ENCODE measurements at regions of chr21 and their contacts with region 1.

Region 1: DNA sequence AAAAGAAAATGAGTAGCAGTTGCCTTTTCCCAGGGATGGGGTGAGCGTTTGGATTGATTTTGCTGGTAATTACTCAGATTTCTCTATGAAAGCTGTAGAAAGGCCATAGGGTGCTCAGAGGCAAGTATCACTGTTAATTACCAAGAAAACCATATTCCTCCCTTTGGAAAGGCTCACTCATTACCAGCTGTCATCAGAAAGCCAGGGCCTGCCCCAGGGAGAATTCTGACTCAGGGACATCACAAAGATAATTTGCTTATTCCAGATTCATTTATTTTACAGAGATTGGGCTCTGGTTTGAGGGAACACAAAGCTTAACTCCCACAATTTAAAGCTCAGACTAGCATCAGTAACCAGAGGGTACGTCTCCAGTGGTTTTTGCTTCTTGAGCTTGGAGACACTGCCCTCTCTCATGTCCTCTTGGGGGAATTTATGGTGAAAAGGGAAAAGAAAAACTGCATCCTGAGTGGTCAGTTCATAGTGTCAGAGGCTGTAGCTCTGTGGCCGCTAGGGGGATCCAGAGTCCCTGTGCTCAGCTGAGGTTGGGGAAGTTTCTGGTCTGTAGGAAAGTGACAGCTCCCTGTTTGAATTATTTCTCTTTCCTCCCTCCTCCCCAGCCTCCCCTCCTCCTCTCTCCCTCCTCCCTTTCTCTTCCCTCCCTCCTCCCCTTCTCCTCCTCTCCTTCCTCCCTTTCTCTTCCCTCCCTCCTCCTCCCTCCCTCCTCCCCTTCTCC is 204.3 kb downstream of the KCNJ6 start:
- DNase-seq: peak; percentile 76 to 77
- H3K4me3 ChIP-seq: no peak overlapping the region
- H3K4me3 Mint-ChIP-seq: no peak overlapping the region
- H3K27ac Mint-ChIP-seq: no peak overlapping the region
- H3K4me1 ChIP-seq: peaks cover 9% of the 10 kb centered on the region; the same call in 1 of the 2 replicates
- H3K4me1 Mint-ChIP-seq: peaks cover 13% of the 10 kb centered on the region
- H3K27me3 ChIP-seq: no peaks in the 10 kb centered on the region
- H3K27me3 Mint-ChIP-seq: no peaks in the 10 kb centered on the region
- CTCF ChIP-seq: peak; percentile 86 to 90

Region 2: DNA sequence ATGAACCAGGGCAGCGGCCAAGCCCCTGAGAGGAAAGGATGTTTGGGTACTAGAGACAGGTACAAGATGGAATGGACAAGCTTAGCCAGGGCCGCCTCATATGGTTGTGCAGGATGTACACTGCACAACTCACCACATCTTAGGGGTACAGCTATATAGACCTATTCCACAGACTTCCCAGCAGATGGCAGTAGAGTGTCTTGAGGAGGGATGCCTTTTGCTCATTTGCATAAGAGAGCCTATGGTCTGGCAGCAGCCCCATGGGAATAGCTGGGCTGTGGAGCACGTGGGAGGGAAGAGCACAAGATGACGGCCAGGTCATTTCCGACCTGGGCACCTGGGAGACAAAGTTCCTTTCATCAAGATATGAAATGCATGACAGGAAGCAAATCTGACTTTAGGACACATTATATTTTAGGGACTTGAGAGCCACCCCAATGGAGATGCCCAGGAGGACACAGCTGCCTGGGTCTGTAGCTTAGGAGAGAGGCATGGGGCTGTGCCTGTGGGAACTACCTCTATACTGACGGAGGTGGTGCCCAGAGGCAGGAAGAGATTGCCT is 11.3 kb before region 1 on chr21:
- CTCF ChIA-PET with region 1: interaction called, 28 read pairs
- POLR2A ChIA-PET with region 1: interaction called, 3 read pairs
- intact Hi-C with region 1: no loop called
- DNase-seq: peak; percentile 71 to 73
- H3K4me3 ChIP-seq: no peak overlapping the region
- H3K4me3 Mint-ChIP-seq: no peak overlapping the region
- H3K27ac Mint-ChIP-seq: no peak overlapping the region
- H3K4me1 ChIP-seq: peaks cover 7% of the 10 kb centered on the region
- H3K4me1 Mint-ChIP-seq: no peaks in the 10 kb centered on the region
- H3K27me3 ChIP-seq: no peaks in the 10 kb centered on the region
- H3K27me3 Mint-ChIP-seq: no peaks in the 10 kb centered on the region
- CTCF ChIP-seq: peak; percentile 61 to 65

Region 3: DNA sequence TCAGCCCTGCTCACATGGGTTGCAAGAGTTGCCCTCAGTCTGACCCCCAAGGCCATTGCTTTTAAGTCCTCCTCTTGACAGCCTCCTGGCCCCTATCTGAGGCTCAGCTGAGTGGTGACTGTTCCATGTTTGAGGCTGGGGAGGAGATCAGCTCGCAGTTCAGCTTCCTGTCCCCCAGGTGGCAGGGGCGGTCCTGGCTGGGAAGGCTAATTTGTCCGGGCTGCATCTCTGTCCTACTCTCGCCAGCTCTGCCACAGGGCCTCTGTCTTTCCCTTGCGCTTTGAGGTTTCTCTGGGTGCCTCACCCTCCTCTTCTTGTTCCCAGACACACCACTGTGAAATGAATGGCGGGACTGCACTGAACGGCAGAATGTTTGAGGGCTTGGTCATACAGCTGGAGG is 47.0 kb after region 1 on chr21:
- CTCF ChIA-PET with region 1: interaction called, 10 read pairs
- POLR2A ChIA-PET with region 1: no interaction called
- intact Hi-C with region 1: loop called (anchors 1 kb)
- DNase-seq: peak; percentile 54 to 65
- H3K4me3 ChIP-seq: no peak overlapping the region
- H3K4me3 Mint-ChIP-seq: no peak overlapping the region
- H3K27ac Mint-ChIP-seq: no peak overlapping the region
- H3K4me1 ChIP-seq: peaks cover 6% of the 10 kb centered on the region
- H3K4me1 Mint-ChIP-seq: peaks cover 2% of the 10 kb centered on the region
- H3K27me3 ChIP-seq: no peaks in the 10 kb centered on the region
- H3K27me3 Mint-ChIP-seq: no peaks in the 10 kb centered on the region
- CTCF ChIP-seq: peak; percentile 51 to 78

Region 4: DNA sequence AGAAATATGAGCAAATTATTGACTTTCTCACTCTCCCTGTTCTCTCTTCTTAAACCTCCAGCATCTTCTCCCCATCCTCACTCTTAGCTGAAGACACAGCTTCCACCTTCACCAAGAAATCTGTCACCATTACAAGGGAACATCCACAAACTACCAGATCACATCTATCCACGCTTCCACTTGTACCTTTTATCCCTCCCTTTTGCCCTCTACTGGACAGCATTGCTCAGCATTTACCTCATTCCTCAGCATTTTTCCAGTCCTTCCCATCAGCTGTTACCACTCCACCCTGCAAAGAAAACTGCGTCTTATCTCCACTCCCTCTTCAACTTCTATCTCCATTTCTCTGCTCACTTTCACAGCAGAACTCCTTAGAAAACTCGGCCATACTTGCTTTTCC is 161.7 kb after region 1 on chr21:
- CTCF ChIA-PET with region 1: no interaction called
- POLR2A ChIA-PET with region 1: no interaction called
- intact Hi-C with region 1: loop called (anchors 5 kb)
- DNase-seq: peak in 1 of 2 experiments; percentile 6
- H3K4me3 ChIP-seq: no peak overlapping the region
- H3K4me3 Mint-ChIP-seq: no peak overlapping the region
- H3K27ac Mint-ChIP-seq: no peak overlapping the region
- H3K4me1 ChIP-seq: no peaks in the 10 kb centered on the region
- H3K4me1 Mint-ChIP-seq: no peaks in the 10 kb centered on the region
- H3K27me3 ChIP-seq: no peaks in the 10 kb centered on the region
- H3K27me3 Mint-ChIP-seq: peaks cover 3% of the 10 kb centered on the region
- CTCF ChIP-seq: peak in 1 of 2 experiments; percentile 23

Region 5: GRCh38 chr21:37965088-37965805 is 253.2 kb after region 1 on chr21:
- CTCF ChIA-PET with region 1: no interaction called
- POLR2A ChIA-PET with region 1: no interaction called
- intact Hi-C with region 1: loop called (anchors 5 kb)
- DNase-seq: no peak
- H3K4me3 ChIP-seq: no peak overlapping the region
- H3K4me3 Mint-ChIP-seq: no peak overlapping the region
- H3K27ac Mint-ChIP-seq: no peak overlapping the region
- H3K4me1 ChIP-seq: no peaks in the 10 kb centered on the region
- H3K4me1 Mint-ChIP-seq: no peaks in the 10 kb centered on the region
- H3K27me3 ChIP-seq: no peaks in the 10 kb centered on the region
- H3K27me3 Mint-ChIP-seq: peaks cover 20% of the 10 kb centered on the region
- CTCF ChIP-seq: no peak

Region 6: DNA sequence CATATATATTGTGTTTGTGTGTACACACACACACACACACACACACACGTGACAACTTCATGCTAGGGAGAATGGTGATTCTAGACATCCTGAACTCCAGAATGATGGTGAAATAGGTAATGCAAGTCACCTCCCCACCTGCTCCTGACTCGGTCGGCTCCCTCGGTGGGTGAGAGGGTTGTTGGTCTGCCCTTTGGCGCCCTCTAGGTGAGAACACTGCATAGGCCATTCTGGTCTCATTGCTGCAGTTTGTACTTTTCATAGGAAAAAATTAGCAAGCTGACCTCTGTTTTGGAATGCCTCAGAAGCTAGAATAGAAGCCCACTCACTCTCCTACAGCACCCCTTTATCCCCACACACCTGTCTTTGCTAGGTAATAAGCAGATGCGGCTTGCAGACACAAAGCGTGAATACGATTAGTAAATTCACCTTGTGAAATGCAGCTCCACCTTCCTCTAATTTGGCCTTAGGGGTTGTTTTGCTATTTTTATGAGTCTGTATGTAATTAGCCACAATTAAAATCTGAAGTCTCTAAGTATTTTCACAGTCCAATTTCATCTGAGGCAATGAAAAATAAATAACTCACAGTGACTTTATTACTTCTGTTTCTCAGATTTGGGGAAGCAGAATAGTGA is 414.8 kb after region 1 on chr21:
- CTCF ChIA-PET with region 1: interaction called, 7 read pairs
- POLR2A ChIA-PET with region 1: no interaction called
- intact Hi-C with region 1: loop called (anchors 1 kb)
- DNase-seq: peak; percentile 69 to 79
- H3K4me3 ChIP-seq: no peak overlapping the region
- H3K4me3 Mint-ChIP-seq: no peak overlapping the region
- H3K27ac Mint-ChIP-seq: no peak overlapping the region
- H3K4me1 ChIP-seq: no peaks in the 10 kb centered on the region
- H3K4me1 Mint-ChIP-seq: no peaks in the 10 kb centered on the region
- H3K27me3 ChIP-seq: no peaks in the 10 kb centered on the region
- H3K27me3 Mint-ChIP-seq: peaks cover 5% of the 10 kb centered on the region
- CTCF ChIP-seq: peak; percentile 78 to 81

Region 7: GRCh38 chr21:38355992-38356797 is 644.2 kb after region 1 on chr21:
- CTCF ChIA-PET with region 1: interaction called, 3 read pairs
- POLR2A ChIA-PET with region 1: no interaction called
- intact Hi-C with region 1: loop called (anchors 5 kb)
- DNase-seq: peak; percentile 69 to 81
- H3K4me3 ChIP-seq: no peak overlapping the region
- H3K4me3 Mint-ChIP-seq: no peak overlapping the region
- H3K27ac Mint-ChIP-seq: no peak overlapping the region
- H3K4me1 ChIP-seq: no peaks in the 10 kb centered on the region
- H3K4me1 Mint-ChIP-seq: no peaks in the 10 kb centered on the region
- H3K27me3 ChIP-seq: no peaks in the 10 kb centered on the region
- H3K27me3 Mint-ChIP-seq: peaks cover 8% of the 10 kb centered on the region
- CTCF ChIP-seq: peak; percentile 92

Measured in Caco-2 (cell line).